ENCODE measurements at regions of chr16 and their contacts with region 1.

Region 1: DNA sequence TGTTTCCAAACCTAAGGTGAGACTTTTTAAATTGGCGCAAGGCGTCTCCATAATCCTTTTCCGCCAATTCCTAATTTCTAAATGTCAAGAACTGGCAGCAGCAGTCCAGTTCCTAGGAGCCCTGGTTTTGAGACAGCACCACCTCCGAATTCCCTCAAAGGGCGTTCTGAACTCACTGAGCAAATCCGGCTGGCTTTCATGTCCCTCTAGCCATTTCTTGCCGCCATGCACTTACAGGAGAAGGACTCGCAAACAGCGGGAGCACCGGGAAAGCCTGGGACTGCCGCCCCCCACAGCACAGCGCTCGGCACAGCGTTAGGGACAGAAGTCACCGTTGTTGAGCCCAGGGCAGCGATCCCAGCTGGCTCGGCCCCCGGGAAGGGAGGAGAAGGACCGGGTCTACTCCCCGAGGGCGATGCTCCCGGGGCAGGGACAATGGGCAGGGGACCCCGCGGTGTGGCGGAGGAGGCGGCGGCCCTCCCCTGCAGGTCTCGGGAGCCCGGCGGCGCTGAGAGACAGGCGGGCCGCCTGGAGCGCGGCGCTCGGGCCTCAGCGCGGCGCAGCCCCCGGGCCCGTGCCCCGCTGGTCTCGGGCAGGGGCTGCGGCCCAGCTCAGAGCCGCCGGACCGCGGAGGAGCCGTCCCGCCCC is 545 bp downstream of the ARHGAP17 start:
- DNase-seq: peak; percentile 33 to 46
- H3K4me3 ChIP-seq: peak overlapping the region; percentile 95
- H3K27ac ChIP-seq: peak overlapping the region; percentile 52
- H3K4me1 ChIP-seq: peaks cover 26% of the 10 kb centered on the region
- H3K27me3 ChIP-seq: no peaks in the 10 kb centered on the region
- CTCF ChIP-seq: no peak

Region 2: DNA sequence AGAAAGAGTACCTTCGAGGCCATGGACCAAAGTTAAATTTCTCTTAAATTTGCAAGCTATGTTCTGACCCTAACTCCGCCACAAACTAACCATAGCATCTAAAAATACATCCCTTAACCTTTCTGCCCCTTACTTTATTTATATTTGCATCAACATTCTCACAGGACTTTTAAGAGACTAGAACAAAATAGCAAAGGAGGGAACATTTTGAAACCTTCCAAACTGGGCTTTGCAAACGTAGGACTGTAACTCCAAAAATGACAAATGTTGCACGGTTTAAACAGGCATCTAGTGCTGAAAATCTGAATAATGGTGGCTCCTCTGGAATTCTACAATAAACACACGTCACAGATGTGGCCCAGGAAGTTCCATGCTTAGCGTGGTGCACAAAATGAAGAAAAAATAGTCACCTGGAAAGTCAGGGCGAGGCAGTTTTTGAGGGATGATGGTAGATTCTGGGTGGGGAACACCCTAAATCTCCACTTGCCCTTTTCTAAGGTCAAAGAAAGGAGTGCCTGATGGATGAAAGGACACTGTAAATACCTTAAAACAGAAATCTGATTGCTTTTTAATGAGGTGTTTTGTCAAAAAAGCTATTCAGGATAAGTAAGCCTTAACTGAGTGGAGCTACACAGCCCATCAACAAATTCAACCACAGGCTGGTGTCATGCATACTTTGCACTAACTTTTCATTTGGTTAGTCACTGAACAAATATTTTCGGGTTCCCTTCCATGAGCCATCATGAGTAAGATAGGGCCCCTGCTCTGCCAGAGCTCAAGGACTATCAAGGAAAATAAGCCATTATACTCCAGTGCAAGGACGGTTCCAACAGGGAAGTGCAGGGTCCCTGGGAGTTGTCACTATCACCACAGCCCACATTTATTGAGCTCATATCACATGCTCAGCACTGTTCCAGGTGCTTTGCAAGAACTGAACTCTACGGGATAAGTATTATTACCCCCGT is 20.6 kb before region 1 on chr16:
- CTCF ChIA-PET with region 1: interaction called, 3 read pairs
- POLR2A ChIA-PET with region 1: interaction called, 16 read pairs
- intact Hi-C with region 1: loop called (anchors 1 kb)
- DNase-seq: peak; percentile 57 to 89
- H3K4me3 ChIP-seq: no peak overlapping the region
- H3K27ac ChIP-seq: peak overlapping the region; percentile 55
- H3K4me1 ChIP-seq: peaks cover 32% of the 10 kb centered on the region
- H3K27me3 ChIP-seq: no peaks in the 10 kb centered on the region
- CTCF ChIP-seq: no peak